Activated CD8-positive, alpha-beta T cell treated with anti-CD3 and anti-CD28 coated beads for 36 hours (primary cell): ENCODE measurements at regions of chr20 and their contacts with region 1.

Region 1: GRCh38 chr20:47272893-47273590 is 83.5 kb downstream of the ZMYND8 start:
- DNase-seq: peak; percentile 66
- ATAC-seq: peak; percentile 79
- H3K4me3 Mint-ChIP-seq: no peak overlapping the region
- H3K27ac Mint-ChIP-seq: peak overlapping the region; percentile 92
- H3K4me1 Mint-ChIP-seq: peaks cover 47% of the 10 kb centered on the region
- H3K27me3 Mint-ChIP-seq: no peaks in the 10 kb centered on the region
- CTCF ChIP-seq: peak; percentile 97

Region 2: GRCh38 chr20:47173596-47174216 is 99.3 kb before region 1 on chr20:
- CTCF ChIA-PET with region 1: no interaction called
- POLR2A ChIA-PET with region 1: no interaction called
- intact Hi-C with region 1: no loop called
- DNase-seq: no peak
- ATAC-seq: no peak
- H3K4me3 Mint-ChIP-seq: no peak overlapping the region
- H3K27ac Mint-ChIP-seq: no peak overlapping the region
- H3K4me1 Mint-ChIP-seq: no peaks in the 10 kb centered on the region
- H3K27me3 Mint-ChIP-seq: peaks cover 9% of the 10 kb centered on the region
- CTCF ChIP-seq: no peak

Region 3: GRCh38 chr20:47213966-47214365 is 59.1 kb before region 1 on chr20:
- CTCF ChIA-PET with region 1: interaction called, 12 read pairs
- POLR2A ChIA-PET with region 1: interaction called, 3 read pairs
- intact Hi-C with region 1: no loop called
- DNase-seq: no peak
- ATAC-seq: no peak
- H3K4me3 Mint-ChIP-seq: no peak overlapping the region
- H3K27ac Mint-ChIP-seq: no peak overlapping the region
- H3K4me1 Mint-ChIP-seq: no peaks in the 10 kb centered on the region
- H3K27me3 Mint-ChIP-seq: no peaks in the 10 kb centered on the region
- CTCF ChIP-seq: no peak

Region 4: DNA sequence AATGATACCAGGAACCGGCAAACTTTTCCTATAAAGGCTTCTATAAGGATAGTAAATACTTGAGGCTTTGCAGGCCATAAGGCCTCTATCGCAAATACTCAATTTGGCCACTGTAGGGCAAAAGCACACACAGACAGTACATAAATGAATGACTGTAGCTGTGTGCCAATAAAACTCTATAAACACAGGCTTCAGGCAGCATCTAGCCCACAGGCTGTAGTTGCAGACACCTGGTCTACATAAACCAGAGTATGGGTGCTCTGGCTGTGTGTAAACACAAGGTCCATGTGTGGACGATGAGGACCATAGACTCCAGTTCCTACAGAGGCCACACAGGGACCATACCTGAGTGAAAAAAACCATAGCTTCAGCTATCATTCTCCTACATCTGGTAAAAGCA is 31.2 kb after region 1 on chr20:
- CTCF ChIA-PET with region 1: interaction called, 15 read pairs
- POLR2A ChIA-PET with region 1: interaction called, 3 read pairs
- intact Hi-C with region 1: no loop called
- DNase-seq: no peak
- ATAC-seq: no peak
- H3K4me3 Mint-ChIP-seq: no peak overlapping the region
- H3K27ac Mint-ChIP-seq: peak overlapping the region; percentile 29
- H3K4me1 Mint-ChIP-seq: peaks cover 46% of the 10 kb centered on the region
- H3K27me3 Mint-ChIP-seq: no peaks in the 10 kb centered on the region
- CTCF ChIP-seq: no peak

Region 5: DNA sequence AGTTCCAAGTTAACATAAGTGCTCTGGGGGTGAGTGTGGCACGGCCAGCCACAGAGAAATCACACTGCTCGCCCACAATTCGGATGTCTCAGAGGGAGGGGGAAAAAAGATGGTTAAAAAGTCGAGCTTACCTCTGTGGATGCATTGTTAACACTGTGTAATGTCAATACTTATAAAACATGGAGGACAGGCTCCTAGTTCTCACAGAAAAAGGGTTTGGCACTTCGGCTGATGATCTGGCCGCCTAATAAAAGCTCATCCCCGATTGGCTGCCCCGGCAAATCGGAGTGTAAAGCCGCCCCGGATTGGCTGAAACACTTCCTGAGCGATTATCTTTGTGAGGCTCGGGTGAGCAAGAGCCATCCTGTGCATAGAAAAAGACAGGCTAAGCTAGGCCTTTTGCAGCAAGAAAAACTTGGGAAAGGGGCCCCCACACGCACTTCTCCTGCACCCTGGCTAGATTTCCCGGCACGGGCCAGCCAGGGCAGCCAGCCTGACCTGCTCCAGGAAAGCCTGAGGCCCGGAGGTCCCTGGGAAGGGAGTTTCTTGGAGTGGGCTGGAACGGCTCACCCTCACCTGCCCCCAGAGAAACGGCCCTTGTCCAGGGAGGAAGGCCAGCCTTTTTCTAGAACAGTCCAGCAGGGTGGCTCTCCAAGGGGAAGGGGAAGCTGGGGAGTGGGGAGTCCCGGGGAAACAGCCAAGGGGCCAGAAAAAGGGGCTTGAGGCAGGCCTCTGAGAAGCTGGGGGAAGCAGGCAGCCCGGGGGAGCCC is 83.7 kb after region 1 on chr20 and contains the start of gene ZMYND8:
- CTCF ChIA-PET with region 1: interaction called, 95 read pairs
- POLR2A ChIA-PET with region 1: interaction called, 22 read pairs
- intact Hi-C with region 1: no loop called
- DNase-seq: peak; percentile 95
- ATAC-seq: peak; percentile 88
- H3K4me3 Mint-ChIP-seq: peak within 1 kb of the TSS; percentile 97
- H3K27ac Mint-ChIP-seq: peak within 1 kb of the TSS; percentile 95
- H3K4me1 Mint-ChIP-seq: peaks cover 42% of the 10 kb centered on the region
- H3K27me3 Mint-ChIP-seq: no peaks in the 10 kb centered on the region
- CTCF ChIP-seq: no peak
- total RNA-seq, gene ZMYND8: 31.9 to 33.4 TPM

Region 6: DNA sequence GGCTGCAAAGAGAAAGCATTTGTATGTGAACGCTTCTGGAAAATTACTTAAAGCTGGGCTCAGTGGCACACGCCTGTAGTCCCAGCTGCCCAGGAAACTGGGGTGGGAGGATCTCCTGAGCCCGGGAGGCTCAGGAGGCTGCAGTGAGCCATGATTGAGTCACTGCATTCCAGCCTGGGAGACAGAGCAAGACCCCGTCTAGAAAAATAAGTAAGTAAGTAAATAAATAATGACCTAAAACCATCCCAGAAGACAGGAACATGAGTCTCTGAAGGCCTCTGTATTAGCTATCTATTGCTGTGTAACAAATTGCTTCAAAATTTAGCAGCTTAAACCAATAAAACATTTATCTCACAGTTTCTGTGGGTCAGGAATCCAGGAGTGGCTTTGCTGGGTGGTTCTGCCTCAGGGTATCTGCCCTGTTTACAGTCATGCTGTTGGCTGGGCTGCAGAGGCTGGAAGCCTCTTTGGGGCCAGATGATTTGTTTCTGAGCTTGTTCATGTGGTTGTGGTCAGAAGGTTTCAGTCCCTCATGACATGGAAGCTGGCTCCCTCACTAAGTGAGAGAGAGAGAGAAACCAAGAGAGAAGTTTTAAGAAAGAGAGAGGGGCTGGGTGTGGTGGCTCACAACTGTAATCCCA is 180.2 kb after region 1 on chr20:
- CTCF ChIA-PET with region 1: interaction called, 14 read pairs
- POLR2A ChIA-PET with region 1: no interaction called
- intact Hi-C with region 1: no loop called
- DNase-seq: peak; percentile 75
- ATAC-seq: peak; percentile 82
- H3K4me3 Mint-ChIP-seq: peak overlapping the region; percentile 34
- H3K27ac Mint-ChIP-seq: peak overlapping the region; percentile 70
- H3K4me1 Mint-ChIP-seq: peaks cover 51% of the 10 kb centered on the region
- H3K27me3 Mint-ChIP-seq: no peaks in the 10 kb centered on the region
- CTCF ChIP-seq: no peak

Region 7: DNA sequence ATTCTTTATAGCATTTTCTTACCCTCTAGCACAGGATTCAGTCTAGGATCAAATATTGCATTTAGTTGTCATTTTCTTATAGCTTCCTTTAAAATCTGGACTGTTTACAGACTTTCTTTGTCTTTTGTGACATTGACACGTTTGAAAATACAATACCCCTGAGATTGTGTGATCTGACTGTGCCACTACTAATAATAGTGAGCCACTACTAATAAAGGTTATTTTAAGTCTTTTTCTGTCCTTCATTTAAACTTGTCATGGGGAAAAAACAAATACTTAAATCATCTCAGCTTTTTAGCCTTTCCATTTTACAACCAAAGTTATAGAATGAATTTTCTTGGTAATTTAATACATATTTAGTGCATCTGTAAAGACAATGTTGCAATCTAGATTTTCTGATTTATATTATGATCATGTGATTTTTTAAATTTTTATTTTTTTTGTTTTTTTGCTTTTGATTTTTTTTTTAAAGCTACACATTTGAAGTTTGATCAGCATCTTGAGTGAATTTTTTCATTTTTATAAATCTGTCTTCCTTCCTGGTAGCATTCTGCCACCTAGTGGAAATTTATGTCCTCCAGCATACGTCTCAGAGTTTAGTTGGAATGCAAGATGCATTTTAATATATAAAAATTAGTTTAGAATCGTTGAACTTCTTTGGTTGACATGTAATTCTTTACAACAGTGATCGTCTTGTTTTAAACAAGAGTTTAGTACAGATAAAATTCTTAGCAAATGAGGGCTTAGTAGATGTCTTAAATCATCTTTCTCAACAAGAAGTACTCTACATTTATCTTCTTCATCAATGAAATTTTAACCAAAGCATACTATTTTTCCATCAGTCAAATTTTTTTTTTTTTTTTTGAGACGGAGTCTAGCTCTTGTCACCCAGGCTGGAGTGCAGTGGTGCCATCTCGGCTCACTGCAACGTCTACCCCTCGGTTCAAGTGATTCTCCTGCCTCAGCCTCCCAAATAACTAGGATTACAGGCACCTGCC is 348.1 kb after region 1 on chr20:
- CTCF ChIA-PET with region 1: interaction called, 36 read pairs
- POLR2A ChIA-PET with region 1: no interaction called
- intact Hi-C with region 1: loop called (anchors 5 kb)
- DNase-seq: peak; percentile 21
- ATAC-seq: peak; percentile 58
- H3K4me3 Mint-ChIP-seq: no peak overlapping the region
- H3K27ac Mint-ChIP-seq: peak overlapping the region; percentile 71
- H3K4me1 Mint-ChIP-seq: peaks cover 37% of the 10 kb centered on the region
- H3K27me3 Mint-ChIP-seq: no peaks in the 10 kb centered on the region
- CTCF ChIP-seq: peak; percentile 95